ENCODE measurements at regions of chr19 and their contacts with region 1.

Region 1: GRCh38 chr19:12666265-12667048 is at the starts of genes MAN2B1 and WDR83:
- DNase-seq: peak; percentile 82
- H3K4me3 ChIP-seq: peak within 1 kb of the TSS; percentile 60 to 73 (median 67)
- H3K27ac ChIP-seq: peak within 1 kb of the TSS; percentile 38
- H3K4me1 ChIP-seq: peaks cover 20% of the 10 kb centered on the region
- H3K27me3 ChIP-seq: no peaks in the 10 kb centered on the region
- CTCF ChIP-seq: no peak
- POLR2A ChIP-seq: peak; percentile 49
- total RNA-seq, gene MAN2B1: 73.0 and 76.8 TPM in 2 replicates
- total RNA-seq, gene WDR83: 10.9 and 11.8 TPM in 2 replicates

Region 2: GRCh38 chr19:12484371-12485051 is 181.9 kb before region 1 on chr19 and contains the start of gene ZNF709:
- CTCF ChIA-PET with region 1: no interaction called
- POLR2A ChIA-PET with region 1: no interaction called
- dilution Hi-C with region 1: no loop called
- intact Hi-C with region 1: no loop called
- DNase-seq: peak; percentile 95
- H3K4me3 ChIP-seq: peak within 1 kb of the TSS; percentile 73 to 77 (median 74)
- H3K27ac ChIP-seq: no peak within 1 kb of the TSS
- H3K4me1 ChIP-seq: peaks cover 7% of the 10 kb centered on the region
- H3K27me3 ChIP-seq: no peaks in the 10 kb centered on the region
- CTCF ChIP-seq: no peak
- POLR2A ChIP-seq: peak; percentile 42
- total RNA-seq, gene ZNF709: 1.4 and 1.8 TPM in 2 replicates

Region 3: GRCh38 chr19:12639901-12640613 is 26.4 kb before region 1 on chr19:
- CTCF ChIA-PET with region 1: interaction called, 20 read pairs
- POLR2A ChIA-PET with region 1: no interaction called
- dilution Hi-C with region 1: no loop called
- intact Hi-C with region 1: loop called (anchors 2 kb)
- DNase-seq: peak; percentile 69
- H3K4me3 ChIP-seq: no peak overlapping the region
- H3K27ac ChIP-seq: no peak overlapping the region
- H3K4me1 ChIP-seq: no peaks in the 10 kb centered on the region
- H3K27me3 ChIP-seq: no peaks in the 10 kb centered on the region
- CTCF ChIP-seq: peak; percentile 72 to 86
- POLR2A ChIP-seq: no peak

Measured in endothelial cell of umbilical vein (primary cell).